ENCODE measurements at regions of chr10 and their contacts with region 1.

Region 1: DNA sequence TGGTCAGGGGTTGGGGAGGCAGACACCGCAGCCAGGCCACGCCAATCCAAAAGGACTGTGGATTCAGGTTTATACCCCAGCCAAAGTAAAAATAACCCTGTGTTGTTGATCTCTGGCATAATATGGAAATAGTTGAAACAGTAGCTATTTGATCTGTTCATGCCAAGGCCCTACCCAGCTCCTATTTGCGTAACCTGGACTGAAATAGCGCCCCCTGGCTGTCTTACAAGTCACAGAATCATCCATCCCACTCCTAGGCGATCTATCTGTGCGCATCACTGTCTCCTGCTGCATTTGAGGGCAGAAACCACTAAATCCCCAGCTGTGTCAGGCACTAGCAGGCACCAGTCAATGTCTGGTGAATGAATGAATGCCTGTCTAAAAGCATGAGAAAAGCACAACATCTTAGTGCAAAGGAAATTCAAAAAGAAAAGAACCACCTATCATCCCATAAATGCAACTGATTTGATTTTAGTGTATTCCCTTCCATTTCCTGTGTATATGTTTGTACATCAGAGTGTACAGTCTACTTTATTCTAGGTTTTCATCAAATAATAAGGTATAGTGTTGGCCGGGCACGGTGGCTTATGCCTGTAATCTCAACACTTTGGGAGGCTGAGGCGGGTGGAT is 160.0 kb downstream of the SLIT1 start:
- DNase-seq: peak; percentile 31
- ATAC-seq: peak; percentile 84
- H3K4me3 ChIP-seq: no peak overlapping the region
- H3K27ac ChIP-seq: no peak overlapping the region
- H3K4me1 ChIP-seq: peaks cover 25% of the 10 kb centered on the region
- H3K27me3 ChIP-seq: no peaks in the 10 kb centered on the region; a peak in 1 of 4 replicates
- CTCF ChIP-seq: peak; percentile 73 to 84 (median 75)
- EP300 ChIP-seq: no peak
- POLR2A ChIP-seq: no peak
- RAD21 ChIP-seq: peak; percentile 69

Region 2: DNA sequence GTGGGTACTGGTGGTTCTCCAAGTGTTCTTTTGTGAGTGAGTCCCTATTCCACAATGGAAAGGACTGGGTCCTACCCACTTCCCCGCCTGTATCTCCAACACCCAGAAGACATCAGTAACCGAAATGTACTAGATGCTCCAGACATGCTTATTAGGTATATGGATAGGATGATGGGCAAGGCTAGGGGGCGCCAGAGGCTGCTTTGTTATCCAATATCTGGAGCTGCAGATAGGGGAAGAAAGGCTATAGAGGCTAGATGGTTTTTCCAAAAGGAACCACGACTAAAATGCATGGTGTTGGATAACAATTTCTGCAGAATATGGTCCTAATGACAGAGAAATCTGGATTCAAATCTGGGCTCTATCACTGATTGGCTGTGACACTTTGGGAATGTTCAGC is 382.8 kb before region 1 on chr10:
- CTCF ChIA-PET with region 1: interaction called, 8 read pairs
- POLR2A ChIA-PET with region 1: no interaction called
- RAD21 ChIA-PET with region 1: interaction called, 5 read pairs
- SMC1A ChIA-PET with region 1: interaction called, 6 read pairs
- in situ Hi-C with region 1: no loop called
- intact Hi-C with region 1: loop called (anchors 10 kb)
- DNase-seq: no peak
- ATAC-seq: peak; percentile 78
- H3K4me3 ChIP-seq: no peak overlapping the region
- H3K27ac ChIP-seq: no peak overlapping the region
- H3K4me1 ChIP-seq: peaks cover 34% of the 10 kb centered on the region
- H3K27me3 ChIP-seq: no peaks in the 10 kb centered on the region
- CTCF ChIP-seq: peak; percentile 74 to 94 (median 85)
- EP300 ChIP-seq: no peak
- POLR2A ChIP-seq: no peak
- RAD21 ChIP-seq: peak; percentile 92

Region 3: DNA sequence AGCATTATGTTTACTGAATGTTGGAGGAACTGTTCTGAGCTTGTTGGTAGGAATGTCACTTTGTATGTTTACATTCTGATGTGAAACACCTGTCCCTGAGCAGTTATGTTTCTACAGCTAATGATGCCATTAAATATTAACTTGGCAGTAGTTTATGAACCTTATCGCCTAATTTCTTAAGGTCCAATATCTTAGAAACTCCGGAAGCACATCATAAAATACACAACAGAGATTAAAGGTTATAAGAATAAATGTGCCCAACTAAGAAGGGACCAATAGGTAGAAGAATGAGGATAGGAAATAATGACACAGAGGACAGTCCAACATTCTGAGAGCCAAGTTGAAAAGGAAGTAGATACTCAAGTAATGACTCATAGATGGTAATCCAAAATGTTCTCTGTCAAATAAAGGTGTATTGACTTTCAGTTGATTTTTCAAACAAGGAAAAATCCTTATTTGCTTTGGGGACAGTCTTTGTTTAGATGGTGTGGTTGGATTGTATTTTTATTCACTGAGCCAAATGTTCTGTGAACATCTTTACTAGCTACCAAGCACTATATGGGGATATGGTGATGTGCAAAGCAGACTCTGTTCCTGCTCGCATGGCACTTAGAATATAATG is 161.7 kb before region 1 on chr10:
- CTCF ChIA-PET with region 1: interaction called, 9 read pairs
- POLR2A ChIA-PET with region 1: interaction called, 6 read pairs
- RAD21 ChIA-PET with region 1: interaction called, 11 read pairs
- SMC1A ChIA-PET with region 1: interaction called, 4 read pairs
- in situ Hi-C with region 1: no loop called
- intact Hi-C with region 1: no loop called
- DNase-seq: peak; percentile 40
- ATAC-seq: peak; percentile 81
- H3K4me3 ChIP-seq: no peak overlapping the region
- H3K27ac ChIP-seq: peak overlapping the region; percentile 20
- H3K4me1 ChIP-seq: peaks cover 38% of the 10 kb centered on the region
- H3K27me3 ChIP-seq: no peaks in the 10 kb centered on the region
- CTCF ChIP-seq: no peak
- EP300 ChIP-seq: no peak
- POLR2A ChIP-seq: no peak
- RAD21 ChIP-seq: no peak

Region 4: GRCh38 chr10:96902731-96903358 is 122.9 kb before region 1 on chr10:
- CTCF ChIA-PET with region 1: interaction called, 13 read pairs
- POLR2A ChIA-PET with region 1: no interaction called
- RAD21 ChIA-PET with region 1: interaction called, 4 read pairs
- SMC1A ChIA-PET with region 1: interaction called, 17 read pairs
- in situ Hi-C with region 1: no loop called
- intact Hi-C with region 1: no loop called
- DNase-seq: no peak
- ATAC-seq: peak; percentile 64
- H3K4me3 ChIP-seq: no peak overlapping the region
- H3K27ac ChIP-seq: peak overlapping the region; percentile 31; the same call in 1 of the 2 replicates
- H3K4me1 ChIP-seq: peaks cover 12% of the 10 kb centered on the region
- H3K27me3 ChIP-seq: no peaks in the 10 kb centered on the region
- CTCF ChIP-seq: no peak
- EP300 ChIP-seq: no peak
- POLR2A ChIP-seq: no peak
- RAD21 ChIP-seq: no peak

Region 5: DNA sequence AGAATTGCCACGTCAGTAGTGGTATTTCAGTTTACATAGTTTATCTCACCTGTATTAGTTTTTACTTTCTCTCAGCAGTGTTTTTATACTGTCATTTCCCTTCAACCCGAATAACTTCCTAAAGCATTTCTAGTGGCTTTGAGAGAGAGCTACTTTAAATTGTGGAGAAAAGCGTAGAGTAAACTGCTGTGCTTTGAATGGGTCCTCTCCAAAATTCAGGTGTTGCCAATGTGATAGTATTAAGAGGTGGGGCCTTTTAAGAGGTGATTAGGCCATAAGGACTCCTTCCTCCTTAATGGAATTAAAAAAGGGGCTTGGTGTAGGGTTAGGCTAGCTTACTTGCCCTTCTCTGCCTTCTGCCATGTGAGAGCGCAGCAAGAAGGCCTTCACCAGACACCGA is 95.3 kb before region 1 on chr10:
- CTCF ChIA-PET with region 1: interaction called, 22 read pairs
- POLR2A ChIA-PET with region 1: no interaction called
- RAD21 ChIA-PET with region 1: interaction called, 5 read pairs
- SMC1A ChIA-PET with region 1: interaction called, 6 read pairs
- in situ Hi-C with region 1: no loop called
- intact Hi-C with region 1: no loop called
- DNase-seq: no peak
- ATAC-seq: no peak
- H3K4me3 ChIP-seq: no peak overlapping the region
- H3K27ac ChIP-seq: no peak overlapping the region
- H3K4me1 ChIP-seq: no peaks in the 10 kb centered on the region
- H3K27me3 ChIP-seq: no peaks in the 10 kb centered on the region
- CTCF ChIP-seq: no peak
- EP300 ChIP-seq: no peak
- POLR2A ChIP-seq: no peak
- RAD21 ChIP-seq: no peak

Region 6: GRCh38 chr10:96978621-96979154 is 47.0 kb before region 1 on chr10:
- CTCF ChIA-PET with region 1: interaction called, 85 read pairs
- POLR2A ChIA-PET with region 1: interaction called, 3 read pairs
- RAD21 ChIA-PET with region 1: interaction called, 30 read pairs
- SMC1A ChIA-PET with region 1: interaction called, 96 read pairs
- in situ Hi-C with region 1: no loop called
- intact Hi-C with region 1: no loop called
- DNase-seq: peak; percentile 56
- ATAC-seq: peak; percentile 88
- H3K4me3 ChIP-seq: peak overlapping the region; percentile 13; the same call in 1 of the 2 replicates
- H3K27ac ChIP-seq: peak overlapping the region; percentile 87
- H3K4me1 ChIP-seq: peaks cover 35% of the 10 kb centered on the region
- H3K27me3 ChIP-seq: no peaks in the 10 kb centered on the region
- CTCF ChIP-seq: no peak
- EP300 ChIP-seq: peak in 1 of 2 experiments; percentile 62; a peak in 2 of 4 replicates
- POLR2A ChIP-seq: no peak
- RAD21 ChIP-seq: no peak

Region 7: GRCh38 chr10:97010695-97011206 is 15.0 kb before region 1 on chr10:
- CTCF ChIA-PET with region 1: interaction called, 33 read pairs
- POLR2A ChIA-PET with region 1: interaction called, 3 read pairs
- RAD21 ChIA-PET with region 1: interaction called, 5 read pairs
- SMC1A ChIA-PET with region 1: interaction called, 20 read pairs
- in situ Hi-C with region 1: no loop called
- intact Hi-C with region 1: no loop called
- DNase-seq: no peak
- ATAC-seq: no peak
- H3K4me3 ChIP-seq: no peak overlapping the region
- H3K27ac ChIP-seq: no peak overlapping the region
- H3K4me1 ChIP-seq: no peaks in the 10 kb centered on the region; the same call in 1 of the 2 replicates
- H3K27me3 ChIP-seq: no peaks in the 10 kb centered on the region
- CTCF ChIP-seq: no peak
- EP300 ChIP-seq: no peak
- POLR2A ChIP-seq: no peak
- RAD21 ChIP-seq: no peak